ENCODE measurements at regions of chr18 and their contacts with region 1.

Region 1: DNA sequence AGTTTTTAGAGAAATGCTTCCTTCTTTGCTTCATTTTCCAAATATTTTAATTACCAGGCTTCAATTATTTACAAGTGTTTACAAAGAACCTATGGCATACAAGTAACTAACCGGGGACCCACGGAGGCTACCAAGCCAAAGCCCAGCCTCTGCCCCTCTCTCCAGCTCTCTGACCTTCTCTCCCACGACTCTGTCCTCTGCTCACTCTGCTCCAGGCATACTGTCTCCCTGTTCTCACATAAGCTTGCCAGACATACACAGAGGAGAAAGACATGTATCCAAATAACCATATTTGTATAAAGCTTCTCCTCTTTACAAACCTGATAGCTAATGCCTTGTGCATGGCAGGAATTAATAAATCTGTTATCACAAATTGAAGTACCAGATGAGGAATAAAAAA is 141.3 kb downstream of the ZNF521 start:
- DNase-seq: no peak
- ATAC-seq: no peak
- H3K4me3 ChIP-seq: no peak overlapping the region
- H3K27ac ChIP-seq: no peak overlapping the region
- H3K4me1 ChIP-seq: no peaks in the 10 kb centered on the region
- H3K27me3 ChIP-seq: no peaks in the 10 kb centered on the region
- CTCF ChIP-seq: no peak
- EP300 ChIP-seq: no peak
- POLR2A ChIP-seq: no peak
- RAD21 ChIP-seq: no peak

Region 2: GRCh38 chr18:25262920-25263319 is 52.3 kb after region 1 on chr18:
- CTCF ChIA-PET with region 1: no interaction called
- POLR2A ChIA-PET with region 1: no interaction called
- in situ Hi-C with region 1: no loop called
- intact Hi-C with region 1: loop called (anchors 10 kb)
- DNase-seq: no peak
- ATAC-seq: no peak
- H3K4me3 ChIP-seq: no peak overlapping the region
- H3K27ac ChIP-seq: no peak overlapping the region
- H3K4me1 ChIP-seq: no peaks in the 10 kb centered on the region
- H3K27me3 ChIP-seq: no peaks in the 10 kb centered on the region
- CTCF ChIP-seq: no peak
- EP300 ChIP-seq: no peak
- POLR2A ChIP-seq: no peak
- RAD21 ChIP-seq: no peak

Measured in HepG2 (cell line).